CD8-positive, alpha-beta memory T cell (primary cell): ENCODE measurements at regions of chr12 and their contacts with region 1.

Region 1: GRCh38 chr12:57765042-57765697 is 1.7 kb downstream of the CYP27B1 start:
- DNase-seq: peak in 4 of 5 donors; percentile 32 to 67 (median 41)
- H3K4me3 ChIP-seq: peak overlapping the region; percentile 70
- H3K4me3 Mint-ChIP-seq: peak overlapping the region; percentile 83 to 90 (median 85)
- H3K27ac ChIP-seq: no peak overlapping the region
- H3K27ac Mint-ChIP-seq: peak overlapping the region in 4 of 8 donors; percentile 29 to 95 (median 82)
- H3K4me1 ChIP-seq: peaks cover 24% of the 10 kb centered on the region
- H3K4me1 Mint-ChIP-seq: peaks cover 19 to 30% (median 21%) of the 10 kb centered on the region in 3 donors
- H3K27me3 ChIP-seq: peaks cover 18% of the 10 kb centered on the region
- H3K27me3 Mint-ChIP-seq: peaks cover 30 to 33% of the 10 kb centered on the region in 2 donors

Region 2: GRCh38 chr12:57712701-57713100 is 52.5 kb before region 1 on chr12:
- CTCF ChIA-PET with region 1: no interaction called
- POLR2A ChIA-PET with region 1: no interaction called
- DNase-seq: no peak
- H3K4me3 ChIP-seq: no peak overlapping the region
- H3K4me3 Mint-ChIP-seq: no peak overlapping the region
- H3K27ac ChIP-seq: no peak overlapping the region
- H3K27ac Mint-ChIP-seq: no peak overlapping the region
- H3K4me1 ChIP-seq: no peaks in the 10 kb centered on the region
- H3K4me1 Mint-ChIP-seq: peaks cover 0 to 7% (median 6%) of the 10 kb centered on the region in 3 donors
- H3K27me3 ChIP-seq: no peaks in the 10 kb centered on the region
- H3K27me3 Mint-ChIP-seq: peaks cover 0 to 1% of the 10 kb centered on the region in 2 donors

Region 3: DNA sequence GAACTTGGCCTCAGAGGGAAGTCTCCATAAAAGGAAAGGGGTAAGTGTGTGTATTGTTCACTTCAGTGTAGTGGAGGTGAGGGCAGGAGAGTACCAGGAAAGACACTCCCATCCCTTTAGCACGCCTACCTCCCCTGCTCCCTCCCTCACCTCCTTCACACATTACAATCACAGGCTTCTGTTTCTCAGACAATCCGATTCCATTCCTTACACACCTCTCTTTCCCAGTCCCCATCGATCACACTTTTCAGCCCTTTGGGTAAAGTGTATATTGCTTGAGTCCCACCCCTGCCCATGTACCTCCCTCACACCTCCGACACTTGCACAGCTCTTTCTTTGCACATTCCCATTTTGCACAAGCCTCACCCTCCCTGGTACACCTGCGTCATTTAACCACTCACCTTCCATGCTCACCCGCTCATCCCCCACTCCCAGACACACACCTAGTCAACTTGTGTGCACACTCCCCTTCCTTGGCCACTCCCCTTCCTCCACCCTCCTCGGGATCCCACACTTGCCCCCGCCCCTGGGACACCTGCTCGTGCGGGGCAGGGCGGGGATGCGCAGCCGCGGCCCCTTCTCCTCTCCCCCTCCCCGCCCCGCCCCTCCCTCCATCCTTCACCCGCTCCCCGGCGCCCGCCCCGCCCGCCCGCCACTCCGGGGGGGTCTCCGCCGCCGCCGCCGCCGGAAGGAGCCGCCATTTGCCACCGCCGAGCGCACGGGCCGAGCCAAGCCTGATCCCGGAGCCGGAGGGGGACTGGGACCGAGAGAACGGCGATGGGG is 10.6 kb before region 1 on chr12 and contains the start of gene MARCHF9:
- CTCF ChIA-PET with region 1: interaction called, 37 read pairs
- POLR2A ChIA-PET with region 1: interaction called, 12 read pairs
- DNase-seq: peak; percentile 76 to 92 (median 81)
- H3K4me3 ChIP-seq: peak within 1 kb of the TSS; percentile 65
- H3K4me3 Mint-ChIP-seq: peak within 1 kb of the TSS; percentile 88 to 97 (median 94)
- H3K27ac ChIP-seq: peak within 1 kb of the TSS; percentile 69
- H3K27ac Mint-ChIP-seq: peak within 1 kb of the TSS; percentile 93 to 100 (median 97)
- H3K4me1 ChIP-seq: peaks cover 50% of the 10 kb centered on the region
- H3K4me1 Mint-ChIP-seq: peaks cover 55 to 71% (median 65%) of the 10 kb centered on the region in 3 donors
- H3K27me3 ChIP-seq: no peaks in the 10 kb centered on the region
- H3K27me3 Mint-ChIP-seq: peaks cover 0 to 2% of the 10 kb centered on the region in 2 donors
- total RNA-seq, gene MARCHF9: 26.3 to 27.2 TPM

Region 4: GRCh38 chr12:57815177-57816000 is 50.2 kb after region 1 on chr12:
- CTCF ChIA-PET with region 1: no interaction called
- POLR2A ChIA-PET with region 1: interaction called, 11 read pairs
- DNase-seq: no peak
- H3K4me3 ChIP-seq: no peak overlapping the region
- H3K4me3 Mint-ChIP-seq: no peak overlapping the region
- H3K27ac ChIP-seq: no peak overlapping the region
- H3K27ac Mint-ChIP-seq: peak overlapping the region in 1 of 8 donors; percentile 17
- H3K4me1 ChIP-seq: no peaks in the 10 kb centered on the region
- H3K4me1 Mint-ChIP-seq: peaks cover 3 to 8% (median 4%) of the 10 kb centered on the region in 3 donors
- H3K27me3 ChIP-seq: no peaks in the 10 kb centered on the region
- H3K27me3 Mint-ChIP-seq: no peaks in the 10 kb centered on the region